ENCODE measurements at regions of chr4 and their contacts with region 1.

Region 1: GRCh38 chr4:17636696-17637622 is 22.5 kb downstream of the MED28 start:
- DNase-seq: peak; percentile 76
- ATAC-seq: peak; percentile 82
- H3K4me3 ChIP-seq: no peak overlapping the region
- H3K4me3 Mint-ChIP-seq: no peak overlapping the region
- H3K27ac ChIP-seq: no peak overlapping the region
- H3K27ac Mint-ChIP-seq: no peak overlapping the region
- H3K4me1 ChIP-seq: peaks cover 0 to 3% of the 10 kb centered on the region in 2 donors
- H3K4me1 Mint-ChIP-seq: no peaks in the 10 kb centered on the region
- H3K27me3 ChIP-seq: no peaks in the 10 kb centered on the region
- H3K27me3 Mint-ChIP-seq: no peaks in the 10 kb centered on the region
- CTCF ChIP-seq: peak; percentile 93

Region 2: GRCh38 chr4:17554568-17554967 is 82.4 kb before region 1 on chr4:
- CTCF ChIA-PET with region 1: interaction called, 132 read pairs
- POLR2A ChIA-PET with region 1: no interaction called
- intact Hi-C with region 1: loop called (anchors 1 kb)
- DNase-seq: no peak
- ATAC-seq: no peak
- H3K4me3 ChIP-seq: no peak overlapping the region
- H3K4me3 Mint-ChIP-seq: no peak overlapping the region
- H3K27ac ChIP-seq: no peak overlapping the region
- H3K27ac Mint-ChIP-seq: no peak overlapping the region
- H3K4me1 ChIP-seq: no peaks in the 10 kb centered on the region
- H3K4me1 Mint-ChIP-seq: no peaks in the 10 kb centered on the region
- H3K27me3 ChIP-seq: peaks cover 0 to 3% (median 0%) of the 10 kb centered on the region in 4 experiments
- H3K27me3 Mint-ChIP-seq: peaks cover 32% of the 10 kb centered on the region
- CTCF ChIP-seq: no peak

Region 3: DNA sequence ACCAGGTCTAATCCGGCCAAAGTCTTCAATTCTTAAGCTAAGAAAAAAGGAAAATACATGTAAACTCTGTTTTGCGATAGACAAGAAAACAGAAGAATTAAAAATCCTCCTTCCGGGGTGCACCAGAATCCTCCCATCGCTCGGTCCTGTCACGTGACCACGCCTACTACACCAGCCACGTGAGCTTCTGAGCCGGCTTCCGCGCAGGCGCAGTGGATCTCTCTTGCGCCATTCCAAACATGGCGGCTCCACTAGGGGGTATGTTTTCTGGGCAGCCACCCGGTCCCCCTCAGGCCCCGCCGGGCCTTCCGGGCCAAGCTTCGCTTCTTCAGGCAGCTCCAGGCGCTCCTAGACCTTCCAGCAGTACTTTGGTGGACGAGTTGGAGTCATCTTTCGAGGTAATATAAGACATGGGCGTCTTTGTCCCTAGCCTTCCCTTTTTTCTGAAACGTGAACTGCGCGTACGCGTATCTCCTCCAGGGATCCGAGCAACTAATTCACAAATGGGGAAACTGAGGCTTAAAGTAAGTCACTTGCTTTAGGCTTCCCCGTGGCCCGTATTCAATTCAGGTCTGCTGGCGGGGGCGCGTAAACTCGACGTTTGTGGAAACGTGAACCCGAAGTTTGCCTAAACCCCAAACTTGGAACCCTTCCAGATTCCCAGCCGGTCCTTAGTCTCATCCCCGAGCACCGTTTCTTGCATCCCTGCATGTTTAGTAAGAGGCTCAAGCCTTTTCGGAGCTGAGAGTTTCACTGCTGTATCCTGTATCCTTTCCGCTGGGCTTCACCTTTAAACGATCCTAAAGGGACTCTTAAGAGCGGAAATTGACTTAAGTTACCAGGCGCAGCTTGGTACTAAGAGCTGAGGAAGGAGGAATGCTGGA is 22.3 kb before region 1 on chr4 and contains the start of gene MED28:
- CTCF ChIA-PET with region 1: interaction called, 4 read pairs
- POLR2A ChIA-PET with region 1: no interaction called
- intact Hi-C with region 1: loop called (anchors 1 kb)
- DNase-seq: peak; percentile 96
- ATAC-seq: peak; percentile 91
- H3K4me3 ChIP-seq: peak within 1 kb of the TSS; percentile 73 to 100 (median 97)
- H3K4me3 Mint-ChIP-seq: peak within 1 kb of the TSS; percentile 100
- H3K27ac ChIP-seq: peak within 1 kb of the TSS; percentile 79 to 94
- H3K27ac Mint-ChIP-seq: peak within 1 kb of the TSS; percentile 91
- H3K4me1 ChIP-seq: peaks cover 16 to 35% of the 10 kb centered on the region in 2 donors
- H3K4me1 Mint-ChIP-seq: peaks cover 44% of the 10 kb centered on the region
- H3K27me3 ChIP-seq: no peaks in the 10 kb centered on the region
- H3K27me3 Mint-ChIP-seq: no peaks in the 10 kb centered on the region
- CTCF ChIP-seq: no peak
- total RNA-seq, gene MED28: 81.5 and 83.8 TPM in 2 replicates

Region 4: GRCh38 chr4:18593445-18594002 is 956.6 kb after region 1 on chr4:
- CTCF ChIA-PET with region 1: interaction called, 5 read pairs
- POLR2A ChIA-PET with region 1: no interaction called
- intact Hi-C with region 1: loop called (anchors 2 kb)
- DNase-seq: peak; percentile 70
- ATAC-seq: peak; percentile 49
- H3K4me3 ChIP-seq: no peak overlapping the region
- H3K4me3 Mint-ChIP-seq: no peak overlapping the region
- H3K27ac ChIP-seq: no peak overlapping the region
- H3K27ac Mint-ChIP-seq: no peak overlapping the region
- H3K4me1 ChIP-seq: no peaks in the 10 kb centered on the region
- H3K4me1 Mint-ChIP-seq: peaks cover 3% of the 10 kb centered on the region
- H3K27me3 ChIP-seq: no peaks in the 10 kb centered on the region
- H3K27me3 Mint-ChIP-seq: peaks cover 17% of the 10 kb centered on the region
- CTCF ChIP-seq: peak; percentile 89